Transverse colon (tissue), 4 donors: ENCODE measurements at regions of chr12 and their contacts with region 1.

Region 1: DNA sequence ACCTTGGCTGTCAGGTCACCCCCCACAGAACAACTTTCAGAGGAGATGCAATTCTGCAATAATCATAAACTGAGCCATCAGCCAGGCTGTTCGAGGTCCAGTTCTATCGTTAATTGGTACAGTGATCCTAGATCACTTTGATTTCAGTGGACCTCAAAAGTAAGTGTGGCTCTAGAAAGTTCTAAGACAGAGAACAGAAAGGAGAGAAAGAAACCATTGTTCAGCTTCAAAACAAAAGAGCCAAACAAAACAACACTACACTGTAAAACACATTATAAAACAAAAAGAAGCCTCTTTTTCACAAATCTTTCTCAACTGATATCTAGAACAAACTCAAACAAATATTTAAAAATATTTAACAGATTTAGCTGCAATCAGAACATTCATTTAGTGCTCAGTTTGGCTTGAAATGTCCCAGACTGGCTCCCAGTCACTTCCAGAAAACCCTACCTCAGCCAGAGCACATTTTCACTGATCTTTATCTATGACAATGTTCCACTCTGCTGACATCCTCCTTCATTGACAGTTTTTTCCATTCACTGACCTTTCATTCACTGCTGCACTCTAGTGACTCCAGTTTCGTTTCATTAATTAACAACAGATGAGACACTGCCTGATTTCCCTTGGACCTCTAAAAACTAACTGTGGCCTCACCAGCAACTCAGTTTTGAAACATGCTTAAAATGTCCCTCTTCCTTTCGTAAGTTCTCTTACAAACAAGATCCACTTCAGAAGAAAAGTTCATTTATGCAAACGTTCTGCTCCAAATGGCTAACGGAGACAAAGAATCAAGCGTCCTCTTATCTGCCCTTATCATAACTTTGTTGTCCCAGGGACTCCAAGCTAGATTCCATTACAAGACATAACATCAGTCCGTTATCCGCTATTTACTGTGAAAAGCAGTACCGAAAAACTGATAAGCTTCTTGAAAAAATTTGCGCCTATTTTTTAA is 56.8 kb downstream of the DUSP16 start:
- DNase-seq: no peak
- H3K4me3 ChIP-seq: no peak overlapping the region
- H3K27ac ChIP-seq: peak overlapping the region; percentile 52 to 65 (median 60)
- H3K4me1 ChIP-seq: peaks cover 5 to 24% (median 9%) of the 10 kb centered on the region in 4 donors
- H3K27me3 ChIP-seq: no peaks in the 10 kb centered on the region
- CTCF ChIP-seq: no peak
- EP300 ChIP-seq: no peak
- POLR2A ChIP-seq: no peak

Region 2: DNA sequence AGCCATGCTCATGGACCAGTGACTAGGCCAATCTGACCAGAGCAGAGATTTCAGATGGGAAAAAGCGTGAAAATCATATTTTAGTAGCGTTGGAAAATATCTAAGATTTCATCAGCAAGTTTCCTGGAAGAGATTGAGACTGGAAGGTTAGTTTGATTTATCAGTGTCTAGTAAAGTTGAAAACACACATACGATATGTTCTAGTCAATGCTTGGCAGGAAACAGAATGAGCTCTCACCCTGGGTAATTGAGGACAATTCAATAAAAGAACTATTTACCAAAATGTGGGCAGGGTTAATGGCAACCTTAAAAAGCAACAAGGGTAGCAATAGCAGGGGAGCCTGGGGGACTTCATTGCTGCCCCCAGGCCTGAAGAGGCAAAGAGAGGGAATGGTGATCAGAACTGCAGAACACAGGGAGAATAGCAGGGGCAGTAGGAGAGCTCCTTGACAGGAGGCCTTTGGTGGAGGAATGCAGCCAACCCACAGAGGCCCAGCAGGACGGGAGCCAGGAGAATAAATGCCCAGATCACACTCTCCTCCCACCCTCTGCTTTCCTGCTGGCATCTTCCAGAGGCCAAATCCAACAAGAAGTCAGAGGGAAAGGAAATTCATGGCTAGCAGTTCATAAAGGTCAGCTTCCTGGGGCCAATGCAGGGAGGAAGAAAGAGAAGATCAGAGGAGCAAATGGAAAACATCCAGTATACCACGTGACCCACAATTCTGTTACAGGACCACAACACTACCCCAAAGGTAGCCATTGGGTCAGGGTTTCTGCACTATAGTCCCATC is 211.4 kb before region 1 on chr12:
- in situ Hi-C with region 1: no loop called
- intact Hi-C with region 1: no loop called
- DNase-seq: no peak
- H3K4me3 ChIP-seq: no peak overlapping the region
- H3K27ac ChIP-seq: no peak overlapping the region
- H3K4me1 ChIP-seq: peaks cover 0 to 4% (median 0%) of the 10 kb centered on the region in 4 donors
- H3K27me3 ChIP-seq: no peaks in the 10 kb centered on the region
- CTCF ChIP-seq: no peak
- EP300 ChIP-seq: no peak
- POLR2A ChIP-seq: no peak

Region 3: GRCh38 chr12:12645485-12645884 is 139.7 kb after region 1 on chr12:
- in situ Hi-C with region 1: loop called in 1 of 4 experiments (anchors 10 kb)
- intact Hi-C with region 1: no loop called
- DNase-seq: peak; percentile 22
- H3K4me3 ChIP-seq: no peak overlapping the region
- H3K27ac ChIP-seq: no peak overlapping the region
- H3K4me1 ChIP-seq: no peaks in the 10 kb centered on the region
- H3K27me3 ChIP-seq: no peaks in the 10 kb centered on the region
- CTCF ChIP-seq: peak; percentile 37 to 51 (median 41)
- EP300 ChIP-seq: no peak
- POLR2A ChIP-seq: no peak